CD14-positive monocyte (primary cell): ENCODE measurements at regions of chr5 and their contacts with region 1.

Region 1: GRCh38 chr5:177390363-177391300 is 6.4 kb downstream of the SLC34A1 start:
- DNase-seq: peak; percentile 83 to 87 (median 83)
- H3K4me3 ChIP-seq: peak overlapping the region in 1 of 3 experiments; percentile 48
- H3K4me3 Mint-ChIP-seq: peak overlapping the region; percentile 48 to 55
- H3K27ac ChIP-seq: peak overlapping the region; percentile 55 to 85
- H3K27ac Mint-ChIP-seq: peak overlapping the region; percentile 73 to 97 (median 91)
- H3K4me1 ChIP-seq: peaks cover 44 to 48% of the 10 kb centered on the region in 2 donors
- H3K4me1 Mint-ChIP-seq: peaks cover 52% of the 10 kb centered on the region
- H3K27me3 ChIP-seq: no peaks in the 10 kb centered on the region
- H3K27me3 Mint-ChIP-seq: peaks cover 3 to 10% (median 8%) of the 10 kb centered on the region in 3 donors
- CTCF ChIP-seq: peak; percentile 99

Region 2: DNA sequence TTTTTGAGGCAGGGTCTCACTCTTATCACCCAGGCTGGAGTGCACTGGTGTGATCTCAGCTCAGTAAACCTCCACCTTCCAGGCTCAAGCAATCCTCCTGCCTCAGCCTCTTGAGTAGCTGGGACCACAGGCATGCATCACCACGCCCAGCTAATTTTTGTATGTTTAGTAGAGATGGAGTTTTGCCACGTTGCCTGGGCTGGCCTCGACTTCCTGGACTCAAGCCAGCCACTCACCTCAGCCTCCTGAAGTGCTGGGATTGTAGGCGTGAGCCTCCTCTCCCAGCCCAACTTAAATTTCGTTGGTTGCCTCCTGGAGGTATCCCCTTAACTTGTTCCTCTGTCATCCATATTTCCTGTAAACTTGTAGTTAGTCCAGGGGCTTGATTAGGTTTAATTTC is 134.3 kb before region 1 on chr5:
- intact Hi-C with region 1: no loop called
- DNase-seq: no peak
- H3K4me3 ChIP-seq: no peak overlapping the region
- H3K4me3 Mint-ChIP-seq: no peak overlapping the region
- H3K27ac ChIP-seq: no peak overlapping the region
- H3K27ac Mint-ChIP-seq: peak overlapping the region in 1 of 7 donors; percentile 8
- H3K4me1 ChIP-seq: no peaks in the 10 kb centered on the region
- H3K4me1 Mint-ChIP-seq: no peaks in the 10 kb centered on the region
- H3K27me3 ChIP-seq: no peaks in the 10 kb centered on the region
- H3K27me3 Mint-ChIP-seq: no peaks in the 10 kb centered on the region
- CTCF ChIP-seq: no peak

Region 3: GRCh38 chr5:177325868-177326381 is 64.7 kb before region 1 on chr5:
- intact Hi-C with region 1: loop called in 1 of 2 experiments (anchors 2 kb)
- DNase-seq: no peak
- H3K4me3 ChIP-seq: no peak overlapping the region
- H3K4me3 Mint-ChIP-seq: no peak overlapping the region
- H3K27ac ChIP-seq: no peak overlapping the region
- H3K27ac Mint-ChIP-seq: no peak overlapping the region
- H3K4me1 ChIP-seq: peaks cover 5 to 19% of the 10 kb centered on the region in 2 donors
- H3K4me1 Mint-ChIP-seq: peaks cover 30% of the 10 kb centered on the region
- H3K27me3 ChIP-seq: no peaks in the 10 kb centered on the region
- H3K27me3 Mint-ChIP-seq: peaks cover 0 to 6% (median 2%) of the 10 kb centered on the region in 3 donors
- CTCF ChIP-seq: no peak

Region 4: GRCh38 chr5:177425801-177426565 is 35.4 kb after region 1 on chr5:
- intact Hi-C with region 1: loop called in 1 of 2 experiments (anchors 5 kb)
- DNase-seq: peak; percentile 100
- H3K4me3 ChIP-seq: peak overlapping the region; percentile 32 to 74 (median 34)
- H3K4me3 Mint-ChIP-seq: peak overlapping the region; percentile 80 to 91
- H3K27ac ChIP-seq: peak overlapping the region; percentile 84 to 88
- H3K27ac Mint-ChIP-seq: peak overlapping the region; percentile 97 to 100 (median 99)
- H3K4me1 ChIP-seq: peaks cover 47 to 54% of the 10 kb centered on the region in 2 donors
- H3K4me1 Mint-ChIP-seq: peaks cover 55% of the 10 kb centered on the region
- H3K27me3 ChIP-seq: no peaks in the 10 kb centered on the region
- H3K27me3 Mint-ChIP-seq: peaks cover 0 to 1% (median 0%) of the 10 kb centered on the region in 3 donors
- CTCF ChIP-seq: no peak